Right cardiac atrium (tissue), 5 donors: ENCODE measurements at regions of chr10 and their contacts with region 1.

Region 1: DNA sequence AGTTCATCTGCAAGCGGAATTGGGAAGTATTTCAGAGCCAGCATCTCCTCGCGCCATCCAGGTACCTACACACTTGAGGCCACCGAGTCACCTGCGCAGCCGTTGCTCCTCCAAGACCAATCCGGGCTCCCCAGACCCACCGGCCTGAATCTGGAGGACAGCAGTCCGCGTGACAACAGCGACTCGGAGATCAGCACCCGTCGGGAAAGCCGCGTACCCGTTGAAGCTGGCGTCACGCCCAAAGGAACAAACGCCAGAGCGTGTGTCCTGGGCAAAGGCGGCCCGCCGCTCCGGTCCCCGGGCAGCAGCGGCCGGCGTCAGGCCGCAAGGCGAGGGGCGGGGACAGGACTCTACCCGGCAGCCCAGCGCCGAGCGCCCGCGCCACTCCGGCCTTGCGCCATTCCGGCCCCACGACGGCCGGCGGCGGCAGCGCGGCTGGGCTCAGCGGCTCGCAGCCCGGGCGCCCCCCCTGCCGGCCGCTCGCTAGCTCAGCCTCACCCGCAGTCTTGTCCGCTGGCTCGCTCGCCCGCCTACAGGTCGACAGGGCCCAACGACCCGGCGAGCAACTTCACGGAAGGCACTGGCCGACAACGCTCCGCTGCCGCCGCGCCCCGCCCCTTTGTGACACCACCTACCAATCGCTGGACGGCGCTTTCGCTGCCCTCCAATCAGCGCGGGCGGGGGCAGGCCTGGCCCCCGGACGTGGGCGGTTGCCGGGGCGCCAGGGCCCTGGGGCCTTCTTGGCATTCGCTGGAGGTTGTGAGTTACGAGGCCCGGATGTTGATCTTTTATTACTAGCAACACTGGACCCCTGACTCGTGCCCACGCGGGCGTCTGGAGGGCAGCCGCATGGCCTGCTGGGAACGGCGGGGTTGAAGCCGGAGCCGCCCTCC is at the start of gene ZFAND4:
- DNase-seq: peak; percentile 99
- ATAC-seq: peak; percentile 99
- H3K4me3 ChIP-seq: peak within 1 kb of the TSS; percentile 55
- H3K27ac ChIP-seq: peak within 1 kb of the TSS; percentile 86
- H3K4me1 ChIP-seq: no peaks in the 10 kb centered on the region
- H3K27me3 ChIP-seq: no peaks in the 10 kb centered on the region
- total RNA-seq, gene ZFAND4: 16.3 to 20.6 (median 18.6) TPM

Region 2: DNA sequence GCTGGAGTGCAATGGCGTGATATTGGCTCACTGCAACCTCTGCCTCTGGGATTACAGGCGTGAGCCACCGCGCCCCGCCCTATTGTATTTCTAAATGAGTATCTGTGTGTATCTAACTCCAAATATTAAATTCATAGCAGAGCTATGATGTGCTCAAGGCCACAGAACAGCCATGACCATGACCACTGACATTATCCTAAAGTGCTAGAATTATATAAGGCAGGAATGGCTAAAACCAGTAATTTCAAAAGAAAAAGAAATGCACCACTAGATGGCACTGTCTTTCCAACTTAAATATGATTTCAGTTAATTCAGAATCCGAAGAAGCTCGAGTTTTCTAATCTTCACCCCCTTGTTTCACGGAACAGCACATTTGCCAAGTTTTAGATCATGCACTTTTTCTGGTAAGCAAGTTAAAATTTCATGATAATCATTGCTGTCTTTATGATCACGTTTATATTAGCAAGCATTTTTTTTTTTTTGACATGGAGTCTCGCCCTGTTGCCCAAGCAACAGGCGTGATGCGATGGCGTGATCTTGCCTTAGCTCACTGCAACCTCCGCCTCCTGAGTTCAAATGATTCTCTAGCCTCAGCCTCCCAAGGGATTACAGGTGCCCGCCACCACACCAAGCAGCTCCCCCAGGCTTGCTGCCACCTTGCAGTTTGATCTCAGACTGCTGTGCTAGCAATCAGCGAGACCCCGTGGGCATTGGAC is 422.3 kb before region 1 on chr10:
- intact Hi-C with region 1: loop called in 1 of 4 experiments (anchors 10 kb)
- DNase-seq: peak in 2 of 3 donors; percentile 51 to 55
- ATAC-seq: peak; percentile 63 to 64
- H3K4me3 ChIP-seq: no peak overlapping the region
- H3K27ac ChIP-seq: no peak overlapping the region
- H3K4me1 ChIP-seq: no peaks in the 10 kb centered on the region
- H3K27me3 ChIP-seq: no peaks in the 10 kb centered on the region

Region 3: DNA sequence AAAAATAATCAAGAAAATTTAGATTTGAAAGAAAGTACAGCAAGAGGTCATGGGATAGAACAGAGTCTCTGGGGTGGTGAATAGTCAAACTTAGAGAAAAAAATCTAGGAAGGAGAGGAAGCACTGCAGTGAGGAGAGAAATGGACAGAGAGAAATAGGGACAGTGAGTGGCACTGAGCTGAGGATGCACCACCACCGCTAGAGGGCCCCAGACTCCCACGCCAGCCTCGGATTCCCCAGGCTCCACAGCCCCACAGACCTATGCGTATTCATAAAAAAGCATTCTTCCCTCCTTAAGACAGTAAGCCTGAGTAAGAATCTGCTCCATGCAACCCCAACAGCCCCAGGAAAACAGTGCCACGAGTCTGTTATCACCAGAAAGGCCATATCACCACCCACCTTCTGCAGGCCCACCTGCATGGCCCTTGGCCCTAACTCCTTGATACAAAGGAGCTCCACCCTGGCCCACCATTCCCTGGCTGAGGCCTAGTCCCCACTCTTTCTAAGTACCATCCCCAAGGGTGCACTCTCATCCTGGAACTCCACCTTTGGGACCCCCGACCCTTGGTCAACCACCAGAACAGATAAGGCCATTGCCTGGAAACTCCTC is 207.4 kb before region 1 on chr10:
- intact Hi-C with region 1: loop called in 1 of 4 experiments (anchors 10 kb)
- DNase-seq: peak; percentile 78 to 91 (median 89)
- ATAC-seq: peak; percentile 93 to 94
- H3K4me3 ChIP-seq: no peak overlapping the region
- H3K27ac ChIP-seq: no peak overlapping the region
- H3K4me1 ChIP-seq: peaks cover 4% of the 10 kb centered on the region
- H3K27me3 ChIP-seq: no peaks in the 10 kb centered on the region

Region 4: DNA sequence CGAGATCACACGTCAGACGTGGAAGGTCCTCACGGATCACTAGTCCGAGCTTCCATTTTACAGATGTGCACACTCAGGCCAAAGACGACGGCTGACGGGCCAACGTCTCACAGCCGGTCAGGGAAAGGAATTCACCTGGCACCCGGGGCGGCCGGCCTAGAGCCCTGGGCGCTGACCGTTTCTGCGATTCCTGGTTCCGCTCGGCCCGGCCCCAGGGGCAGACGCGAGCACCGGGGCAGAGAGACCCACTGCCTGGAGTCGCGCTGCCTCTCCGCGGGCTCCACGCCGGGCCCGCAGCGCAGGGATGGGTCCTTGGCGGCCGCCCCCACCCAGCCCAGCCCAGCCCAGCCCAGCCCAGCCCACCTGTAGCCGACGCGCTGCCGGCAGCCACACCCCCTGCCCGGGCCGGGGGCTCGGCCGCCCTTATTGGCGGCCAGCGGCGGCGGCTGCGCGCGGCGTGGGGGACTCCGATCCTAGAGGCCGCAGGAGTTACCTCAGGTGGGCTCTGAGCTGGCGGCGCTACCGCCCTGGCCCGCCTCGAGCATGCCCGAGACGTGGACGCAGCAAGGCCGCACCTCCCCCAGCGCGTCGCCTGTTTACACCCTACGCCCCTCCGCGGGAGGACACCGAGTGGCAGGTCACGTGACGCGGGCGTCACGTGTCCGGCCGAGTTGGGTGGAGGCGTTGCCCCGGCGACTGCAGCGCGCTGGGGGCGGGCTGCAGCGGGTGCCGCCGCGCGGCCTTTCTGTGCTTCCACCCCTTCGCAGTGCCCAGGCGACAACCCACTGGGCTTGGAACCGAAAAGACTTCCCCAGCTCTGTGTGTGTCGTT is 77.9 kb before region 1 on chr10:
- intact Hi-C with region 1: loop called in 1 of 4 experiments (anchors 10 kb)
- DNase-seq: peak; percentile 94 to 98 (median 97)
- ATAC-seq: peak; percentile 99
- H3K4me3 ChIP-seq: peak overlapping the region; percentile 88
- H3K27ac ChIP-seq: peak overlapping the region; percentile 42
- H3K4me1 ChIP-seq: no peaks in the 10 kb centered on the region
- H3K27me3 ChIP-seq: no peaks in the 10 kb centered on the region